ENCODE measurements at regions of chr20 and their contacts with region 1.

Region 1: GRCh38 chr20:16573001-16573965 is at the start of gene KIF16B:
- DNase-seq: peak; percentile 97
- H3K4me3 Mint-ChIP-seq: peak within 1 kb of the TSS; percentile 89
- H3K27ac Mint-ChIP-seq: peak within 1 kb of the TSS; percentile 88
- H3K4me1 Mint-ChIP-seq: peaks cover 34% of the 10 kb centered on the region
- H3K27me3 Mint-ChIP-seq: no peaks in the 10 kb centered on the region
- total RNA-seq, gene KIF16B: 7.5 and 8.1 TPM in 2 replicates

Region 2: GRCh38 chr20:16125816-16126215 is 447.5 kb before region 1 on chr20:
- intact Hi-C with region 1: no loop called
- DNase-seq: no peak
- H3K4me3 Mint-ChIP-seq: no peak overlapping the region
- H3K27ac Mint-ChIP-seq: no peak overlapping the region
- H3K4me1 Mint-ChIP-seq: no peaks in the 10 kb centered on the region
- H3K27me3 Mint-ChIP-seq: no peaks in the 10 kb centered on the region

Region 3: DNA sequence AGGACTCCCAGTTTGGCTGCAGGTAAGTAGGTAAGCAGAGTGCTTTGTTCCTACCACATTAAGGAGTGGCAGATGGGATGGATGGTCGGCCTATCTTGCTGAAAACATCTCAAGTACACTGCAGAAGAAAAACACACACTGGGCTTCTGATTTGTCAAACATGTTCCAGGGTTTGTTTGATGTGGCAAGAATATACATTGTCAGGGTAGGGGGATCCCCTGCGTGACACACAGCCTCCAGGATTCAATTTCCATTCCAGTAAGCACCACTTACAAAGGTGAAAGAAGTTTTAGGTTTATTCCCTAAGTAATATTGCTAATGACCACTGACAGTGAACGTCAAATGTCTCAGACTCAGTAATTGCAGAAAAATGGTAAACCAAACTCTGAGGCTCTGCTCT is 26.0 kb after region 1 on chr20:
- intact Hi-C with region 1: loop called (anchors 2 kb)
- DNase-seq: no peak
- H3K4me3 Mint-ChIP-seq: no peak overlapping the region
- H3K27ac Mint-ChIP-seq: no peak overlapping the region
- H3K4me1 Mint-ChIP-seq: peaks cover 4% of the 10 kb centered on the region
- H3K27me3 Mint-ChIP-seq: peaks cover 8% of the 10 kb centered on the region

Region 4: DNA sequence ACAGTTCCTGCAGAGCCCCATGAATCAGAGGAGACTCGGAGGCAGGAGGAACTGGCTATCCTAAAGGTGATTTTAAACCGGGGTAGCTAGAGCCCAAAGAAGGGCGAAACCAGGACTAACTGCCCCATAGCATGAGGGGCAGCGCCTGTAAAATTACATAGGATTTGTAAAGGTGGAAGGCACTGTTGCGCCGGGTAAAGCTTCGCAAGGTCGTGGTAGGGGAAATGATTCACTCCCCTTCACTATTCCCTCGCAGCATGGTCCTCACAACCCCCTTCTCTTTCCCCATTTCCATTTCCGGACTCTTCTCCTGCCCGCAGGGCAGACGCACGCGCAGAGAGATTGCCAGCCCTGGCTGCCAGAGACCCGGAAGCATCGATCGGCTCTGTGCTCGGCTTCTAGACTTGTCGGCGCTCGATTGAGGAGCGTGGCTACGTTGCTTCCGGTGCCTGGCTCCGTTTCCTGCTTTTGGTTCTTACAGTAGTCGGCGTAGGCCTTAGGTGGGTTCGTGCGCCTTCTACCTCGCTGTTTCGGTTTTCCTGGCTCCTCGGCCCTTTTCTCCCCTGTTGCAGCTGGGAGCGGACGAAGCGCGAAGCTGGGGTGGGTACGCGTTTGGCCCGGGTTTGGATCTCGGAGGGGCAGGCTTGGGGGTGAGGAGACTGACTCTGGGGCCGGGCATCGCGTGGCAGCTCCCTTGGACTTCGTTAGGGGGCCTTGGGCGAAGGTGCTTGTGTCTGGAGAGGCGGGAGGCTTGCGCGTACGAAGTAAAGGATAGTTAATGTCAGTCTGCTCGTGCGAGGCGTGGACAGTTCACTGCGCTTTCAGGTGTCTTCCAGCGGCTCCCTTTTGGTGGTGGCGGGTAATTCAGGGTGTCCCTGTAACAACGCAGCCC is 156.5 kb after region 1 on chr20 and contains the start of gene SNRPB2:
- intact Hi-C with region 1: loop called (anchors 1 kb)
- DNase-seq: peak; percentile 97
- H3K4me3 Mint-ChIP-seq: peak within 1 kb of the TSS; percentile 100
- H3K27ac Mint-ChIP-seq: peak within 1 kb of the TSS; percentile 100
- H3K4me1 Mint-ChIP-seq: peaks cover 49% of the 10 kb centered on the region
- H3K27me3 Mint-ChIP-seq: peaks cover 16% of the 10 kb centered on the region
- total RNA-seq, gene SNRPB2: 132 and 134 TPM in 2 replicates

Region 5: GRCh38 chr20:18137412-18138265 is 1564.4 kb after region 1 on chr20 and contains the starts of genes KAT14 and PET117:
- intact Hi-C with region 1: loop called (anchors 10 kb)
- DNase-seq: peak; percentile 98
- H3K4me3 Mint-ChIP-seq: peak within 1 kb of the TSS; percentile 75
- H3K27ac Mint-ChIP-seq: peak within 1 kb of the TSS; percentile 89
- H3K4me1 Mint-ChIP-seq: peaks cover 26% of the 10 kb centered on the region
- H3K27me3 Mint-ChIP-seq: peaks cover 3% of the 10 kb centered on the region
- total RNA-seq, gene KAT14: 16.5 and 16.8 TPM in 2 replicates
- total RNA-seq, gene PET117: 18.5 and 19.5 TPM in 2 replicates